ENCODE measurements at regions of chr9 and their contacts with region 1.

Region 1: DNA sequence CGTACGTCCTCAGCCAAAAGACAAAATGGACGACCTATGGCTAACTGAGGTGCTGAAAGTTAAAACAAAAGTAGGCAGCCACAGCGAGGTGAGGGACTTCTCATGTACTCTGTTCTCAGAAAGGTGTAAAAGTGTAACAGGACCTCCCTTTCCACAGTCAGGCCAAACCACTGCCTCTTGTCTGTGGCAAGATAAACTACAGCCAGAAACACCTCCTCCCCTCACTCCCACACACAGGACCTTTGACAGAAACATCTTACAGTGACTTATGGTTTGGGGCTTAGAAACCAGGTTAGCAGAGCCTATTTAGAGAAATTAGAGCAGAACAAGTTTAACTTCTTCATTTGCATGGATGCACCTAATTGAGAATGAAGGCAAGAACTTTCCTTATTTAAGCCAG is 499.1 kb upstream of the GRIN3A start:
- DNase-seq: no peak
- ATAC-seq: no peak

Region 2: DNA sequence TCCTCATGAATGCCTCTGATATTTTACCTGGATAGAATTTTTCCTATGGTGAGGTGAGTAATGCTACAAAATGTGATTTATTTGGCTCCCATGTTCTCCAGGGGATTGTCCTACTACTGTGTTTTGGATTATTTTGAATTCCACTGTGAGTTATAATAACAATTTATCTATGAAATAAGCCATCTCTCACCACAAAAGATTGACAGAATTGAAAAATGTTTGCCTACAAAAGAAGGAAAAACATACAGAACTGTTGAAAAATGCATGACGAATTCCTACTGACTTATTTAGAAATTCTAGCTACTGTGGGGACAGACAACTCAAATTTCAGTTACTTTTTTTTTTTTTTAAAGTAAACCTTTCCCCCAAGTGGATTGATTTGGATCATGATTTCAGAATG is 35.4 kb before region 1 on chr9:
- intact Hi-C with region 1: no loop called
- DNase-seq: no peak
- ATAC-seq: no peak

Region 3: DNA sequence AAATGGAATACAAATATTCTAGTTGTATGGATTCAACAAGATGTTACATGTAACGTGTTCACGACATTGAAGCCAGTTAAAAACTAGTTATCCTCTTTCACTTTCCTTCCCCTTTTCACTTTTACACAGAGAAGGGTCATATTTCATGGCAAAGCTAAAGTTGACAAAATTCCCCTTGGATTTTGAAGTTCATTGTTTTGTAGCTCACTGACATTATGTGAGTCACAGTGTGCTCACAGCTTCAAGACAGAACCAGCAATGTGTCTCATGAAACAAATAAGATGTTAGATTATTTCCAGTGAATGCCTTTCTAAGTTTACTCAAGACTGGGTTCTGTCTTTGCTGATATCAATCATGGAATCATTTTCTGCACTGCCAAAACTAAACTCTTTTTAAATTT is 36.4 kb after region 1 on chr9:
- intact Hi-C with region 1: loop called (anchors 5 kb)
- DNase-seq: no peak
- ATAC-seq: no peak

Measured in Right ventricle myocardium superior (tissue), 1 donor.